ENCODE measurements at regions of chr2 and their contacts with region 1.

Region 1: DNA sequence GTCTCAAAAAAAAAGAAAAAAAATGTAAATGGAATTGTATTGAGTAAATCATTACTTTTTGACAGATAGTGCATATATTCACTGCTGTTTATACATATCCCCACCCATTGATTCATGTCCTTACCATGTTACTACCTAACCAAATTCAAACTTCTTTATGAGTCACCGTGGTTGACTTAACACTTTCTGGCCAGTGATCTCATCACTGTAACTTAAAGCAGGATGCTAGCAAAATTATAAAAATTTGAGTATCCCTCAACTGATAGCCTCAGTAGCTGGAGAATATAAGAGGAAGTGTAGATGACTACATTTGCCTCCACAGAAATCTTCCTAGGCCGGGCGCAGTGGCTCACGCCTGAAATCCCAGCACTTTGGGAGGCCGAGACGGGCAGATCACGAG is 13.4 kb downstream of the CNOT9 start:
- DNase-seq: no peak
- ATAC-seq: no peak
- H3K4me3 ChIP-seq: no peak overlapping the region
- H3K4me1 ChIP-seq: no peaks in the 10 kb centered on the region
- CTCF ChIP-seq: no peak

Region 2: DNA sequence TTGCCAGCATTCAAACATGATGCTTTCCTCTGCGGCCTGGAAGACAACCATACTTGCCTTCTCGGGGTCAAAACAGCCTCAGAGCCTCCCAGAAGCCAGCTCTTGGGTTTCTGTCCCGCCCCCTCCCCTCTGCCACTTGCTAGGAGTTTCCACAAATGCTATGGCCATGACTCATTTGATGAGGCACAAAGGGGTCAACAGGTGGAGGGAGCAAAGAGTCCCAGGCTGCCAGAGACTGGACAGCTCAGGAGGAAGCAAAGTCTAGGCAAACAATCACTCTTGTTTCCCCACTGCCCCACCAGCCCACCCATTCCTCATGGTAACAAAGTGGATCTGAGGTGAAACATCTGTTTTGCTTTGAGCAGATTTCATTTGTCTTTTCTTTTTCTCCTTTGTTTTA is 1130.4 kb before region 1 on chr2:
- intact Hi-C with region 1: no loop called
- DNase-seq: no peak
- ATAC-seq: no peak
- H3K4me3 ChIP-seq: no peak overlapping the region
- H3K4me1 ChIP-seq: no peaks in the 10 kb centered on the region
- CTCF ChIP-seq: no peak

Region 3: DNA sequence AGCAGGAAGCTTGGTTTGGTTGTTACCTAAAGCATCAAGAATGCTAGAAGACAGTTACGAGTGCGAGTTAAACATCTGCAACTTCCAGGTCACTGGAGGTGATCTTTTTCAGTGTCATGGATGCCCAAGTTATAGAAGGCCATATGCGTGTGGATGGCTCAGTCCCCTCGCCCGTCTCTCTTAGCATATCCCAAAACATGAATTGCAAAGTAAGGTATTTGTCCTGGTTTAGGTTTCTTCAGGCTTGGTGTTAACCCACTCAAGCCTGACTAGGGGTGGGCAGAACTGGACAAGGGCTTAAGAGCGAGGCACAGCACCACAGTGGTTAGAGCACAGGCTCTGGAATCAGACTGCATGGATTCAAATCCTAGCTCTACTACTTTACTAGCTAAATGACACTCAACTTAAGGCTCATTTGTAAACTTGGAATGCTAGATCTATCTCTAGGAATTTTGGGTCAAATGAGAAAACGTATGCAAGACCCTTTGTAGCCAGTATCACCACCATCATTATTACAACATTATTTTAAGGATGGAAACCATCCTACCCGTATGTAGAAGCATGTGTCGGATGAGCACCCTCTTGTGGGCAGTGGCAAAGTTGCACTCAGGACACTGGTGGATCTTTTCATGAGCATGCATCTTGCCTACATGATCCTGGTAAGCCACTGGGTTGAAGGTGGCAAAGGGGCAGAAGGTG is 66.2 kb after region 1 on chr2:
- intact Hi-C with region 1: loop called in 1 of 2 experiments (anchors 10 kb)
- DNase-seq: peak in 2 of 3 donors; percentile 56 to 68
- ATAC-seq: peak; percentile 89
- H3K4me3 ChIP-seq: no peak overlapping the region
- H3K4me1 ChIP-seq: no peaks in the 10 kb centered on the region
- CTCF ChIP-seq: peak; percentile 72

Measured in mucosa of descending colon (tissue), 3 donors.